Esophagus muscularis mucosa (tissue), 4 donors: ENCODE measurements at regions of chr14 and their contacts with region 1.

Region 1: GRCh38 chr14:95527387-95528002 is 7.4 kb upstream of the GLRX5 start:
- DNase-seq: no peak
- H3K4me3 ChIP-seq: no peak overlapping the region
- H3K27ac ChIP-seq: peak overlapping the region; percentile 29 to 71 (median 68)
- H3K4me1 ChIP-seq: peaks cover 50 to 55% (median 51%) of the 10 kb centered on the region in 4 donors
- H3K27me3 ChIP-seq: no peaks in the 10 kb centered on the region
- CTCF ChIP-seq: peak; percentile 76 to 78 (median 78)
- EP300 ChIP-seq: no peak
- POLR2A ChIP-seq: no peak

Region 2: GRCh38 chr14:95442633-95443021 is 84.9 kb before region 1 on chr14:
- intact Hi-C with region 1: loop called (anchors 5 kb)
- DNase-seq: peak; percentile 95
- H3K4me3 ChIP-seq: no peak overlapping the region
- H3K27ac ChIP-seq: no peak overlapping the region
- H3K4me1 ChIP-seq: peaks cover 0 to 7% (median 3%) of the 10 kb centered on the region in 4 donors
- H3K27me3 ChIP-seq: peaks cover 0 to 12% (median 0%) of the 10 kb centered on the region in 4 donors
- CTCF ChIP-seq: peak; percentile 63 to 79 (median 70)
- EP300 ChIP-seq: no peak
- POLR2A ChIP-seq: no peak